A673 (cell line): ENCODE measurements at regions of chr19 and their contacts with region 1.

Region 1: GRCh38 chr19:56170261-56170660 is 5.5 kb upstream of the GALP start:
- DNase-seq: no peak
- H3K4me3 ChIP-seq: no peak overlapping the region
- H3K27ac ChIP-seq: no peak overlapping the region
- H3K4me1 ChIP-seq: no peaks in the 10 kb centered on the region
- H3K27me3 ChIP-seq: peaks cover 14% of the 10 kb centered on the region
- CTCF ChIP-seq: no peak

Region 2: GRCh38 chr19:56080669-56081401 is 89.4 kb before region 1 on chr19:
- CTCF ChIA-PET with region 1: interaction called, 7 read pairs
- POLR2A ChIA-PET with region 1: no interaction called
- intact Hi-C with region 1: loop called (anchors 2 kb)
- DNase-seq: peak; percentile 85
- H3K4me3 ChIP-seq: peak overlapping the region; percentile 43
- H3K27ac ChIP-seq: no peak overlapping the region
- H3K4me1 ChIP-seq: peaks cover 4% of the 10 kb centered on the region
- H3K27me3 ChIP-seq: no peaks in the 10 kb centered on the region
- CTCF ChIP-seq: peak; percentile 67

Region 3: GRCh38 chr19:56105090-56105701 is 65.1 kb before region 1 on chr19:
- CTCF ChIA-PET with region 1: interaction called, 9 read pairs
- POLR2A ChIA-PET with region 1: no interaction called
- intact Hi-C with region 1: loop called (anchors 2 kb)
- DNase-seq: peak; percentile 91
- H3K4me3 ChIP-seq: no peak overlapping the region
- H3K27ac ChIP-seq: peak overlapping the region; percentile 82
- H3K4me1 ChIP-seq: peaks cover 31% of the 10 kb centered on the region
- H3K27me3 ChIP-seq: no peaks in the 10 kb centered on the region
- CTCF ChIP-seq: peak; percentile 81